Activated CD8-positive, alpha-beta T cell treated with anti-CD3 and anti-CD28 coated beads for 36 hours (primary cell): ENCODE measurements at regions of chr4 and their contacts with region 1.

Region 1: DNA sequence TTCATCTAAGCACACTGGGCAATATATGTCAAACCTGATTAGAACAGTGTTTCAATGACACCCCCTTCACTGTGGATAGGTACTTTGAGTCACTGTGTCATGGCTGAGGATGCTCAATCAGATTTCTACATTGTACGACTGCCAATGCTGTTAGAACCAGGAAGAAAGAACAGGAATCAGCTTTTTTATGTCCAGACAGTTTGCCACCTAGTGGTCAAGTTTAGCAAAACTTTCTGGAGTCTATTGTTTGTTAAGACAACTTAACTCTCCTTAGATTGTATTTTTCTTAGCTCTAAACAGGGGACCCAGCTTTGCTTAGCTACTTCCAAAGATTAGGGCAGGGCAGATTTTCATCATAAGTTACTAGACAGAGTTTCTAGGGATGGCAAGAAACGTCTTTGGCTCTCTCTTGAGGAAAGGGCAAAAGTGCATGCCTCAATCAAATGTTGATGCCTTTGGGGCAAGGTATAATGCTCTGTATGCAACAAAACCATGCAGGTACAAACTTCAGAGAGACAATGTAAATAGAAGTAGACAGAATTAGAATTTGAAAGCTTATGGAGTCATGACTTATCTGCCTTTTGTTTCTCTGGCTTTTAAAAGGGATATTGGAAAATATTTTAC is 40.5 kb upstream of the BMP3 start:
- DNase-seq: peak; percentile 7
- ATAC-seq: no peak
- H3K4me3 Mint-ChIP-seq: no peak overlapping the region
- H3K27ac Mint-ChIP-seq: no peak overlapping the region
- H3K4me1 Mint-ChIP-seq: no peaks in the 10 kb centered on the region
- H3K27me3 Mint-ChIP-seq: peaks cover 3% of the 10 kb centered on the region
- CTCF ChIP-seq: peak; percentile 82

Region 2: GRCh38 chr4:80365928-80366327 is 624.1 kb before region 1 on chr4:
- CTCF ChIA-PET with region 1: interaction called, 18 read pairs
- POLR2A ChIA-PET with region 1: no interaction called
- intact Hi-C with region 1: loop called (anchors 2 kb)
- DNase-seq: peak; percentile 68
- ATAC-seq: peak; percentile 77
- H3K4me3 Mint-ChIP-seq: no peak overlapping the region
- H3K27ac Mint-ChIP-seq: no peak overlapping the region
- H3K4me1 Mint-ChIP-seq: peaks cover 2% of the 10 kb centered on the region
- H3K27me3 Mint-ChIP-seq: no peaks in the 10 kb centered on the region
- CTCF ChIP-seq: peak; percentile 72

Region 3: DNA sequence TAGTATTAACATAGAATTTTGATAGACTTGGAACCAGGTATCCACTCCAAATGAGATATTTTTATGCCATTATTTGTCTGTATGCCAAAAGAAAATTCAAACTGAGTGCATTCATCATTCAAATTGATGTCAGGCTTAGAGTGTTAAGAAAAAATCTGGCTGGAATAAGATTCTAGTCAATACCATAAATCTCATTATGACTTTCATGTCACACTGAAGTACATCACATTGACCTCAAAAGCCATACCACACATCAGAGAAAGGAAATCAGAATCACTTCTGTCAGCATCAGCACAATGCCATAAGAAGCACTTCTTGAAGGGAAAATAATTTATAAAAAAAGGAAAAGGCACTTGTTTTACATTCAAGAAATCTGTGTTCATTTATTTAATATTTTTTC is 78.6 kb before region 1 on chr4:
- CTCF ChIA-PET with region 1: no interaction called
- POLR2A ChIA-PET with region 1: no interaction called
- intact Hi-C with region 1: no loop called
- DNase-seq: no peak
- ATAC-seq: no peak
- H3K4me3 Mint-ChIP-seq: no peak overlapping the region
- H3K27ac Mint-ChIP-seq: no peak overlapping the region
- H3K4me1 Mint-ChIP-seq: peaks cover 2% of the 10 kb centered on the region
- H3K27me3 Mint-ChIP-seq: no peaks in the 10 kb centered on the region
- CTCF ChIP-seq: no peak